ENCODE measurements at regions of chr12 and their contacts with region 1.

Region 1: GRCh38 chr12:52860063-52860823 is 11.4 kb upstream of the KRT78 start:
- DNase-seq: no peak
- H3K4me3 ChIP-seq: no peak overlapping the region
- H3K27ac ChIP-seq: no peak overlapping the region
- H3K4me1 ChIP-seq: no peaks in the 10 kb centered on the region
- H3K27me3 ChIP-seq: no peaks in the 10 kb centered on the region
- CTCF ChIP-seq: no peak
- POLR2A ChIP-seq: no peak

Region 2: GRCh38 chr12:52522346-52523011 is 337.8 kb before region 1 on chr12:
- intact Hi-C with region 1: no loop called
- DNase-seq: no peak
- H3K4me3 ChIP-seq: no peak overlapping the region
- H3K27ac ChIP-seq: no peak overlapping the region
- H3K4me1 ChIP-seq: no peaks in the 10 kb centered on the region
- H3K27me3 ChIP-seq: peaks cover 0 to 15% (median 0%) of the 10 kb centered on the region in 7 donors
- CTCF ChIP-seq: no peak
- POLR2A ChIP-seq: no peak

Region 3: GRCh38 chr12:52582971-52583456 is 277.2 kb before region 1 on chr12:
- intact Hi-C with region 1: loop called (anchors 5 kb)
- DNase-seq: peak; percentile 71
- H3K4me3 ChIP-seq: no peak overlapping the region
- H3K27ac ChIP-seq: no peak overlapping the region
- H3K4me1 ChIP-seq: peaks cover 0 to 8% (median 0%) of the 10 kb centered on the region in 6 donors
- H3K27me3 ChIP-seq: peaks cover 0 to 24% (median 0%) of the 10 kb centered on the region in 7 donors
- CTCF ChIP-seq: peak in 10 of 11 experiments; percentile 31 to 77 (median 60)
- POLR2A ChIP-seq: no peak

Region 4: GRCh38 chr12:53200458-53201176 is 340.4 kb after region 1 on chr12:
- intact Hi-C with region 1: no loop called
- DNase-seq: no peak
- H3K4me3 ChIP-seq: peak overlapping the region in 1 of 8 donors; percentile 38
- H3K27ac ChIP-seq: peak overlapping the region in 6 of 8 donors; percentile 29 to 72 (median 54)
- H3K4me1 ChIP-seq: peaks cover 38 to 94% (median 82%) of the 10 kb centered on the region in 6 donors
- H3K27me3 ChIP-seq: no peaks in the 10 kb centered on the region
- CTCF ChIP-seq: no peak
- POLR2A ChIP-seq: no peak